Posterior vena cava (tissue), 2 donors: ENCODE measurements at regions of chr6 and their contacts with region 1.

Region 1: DNA sequence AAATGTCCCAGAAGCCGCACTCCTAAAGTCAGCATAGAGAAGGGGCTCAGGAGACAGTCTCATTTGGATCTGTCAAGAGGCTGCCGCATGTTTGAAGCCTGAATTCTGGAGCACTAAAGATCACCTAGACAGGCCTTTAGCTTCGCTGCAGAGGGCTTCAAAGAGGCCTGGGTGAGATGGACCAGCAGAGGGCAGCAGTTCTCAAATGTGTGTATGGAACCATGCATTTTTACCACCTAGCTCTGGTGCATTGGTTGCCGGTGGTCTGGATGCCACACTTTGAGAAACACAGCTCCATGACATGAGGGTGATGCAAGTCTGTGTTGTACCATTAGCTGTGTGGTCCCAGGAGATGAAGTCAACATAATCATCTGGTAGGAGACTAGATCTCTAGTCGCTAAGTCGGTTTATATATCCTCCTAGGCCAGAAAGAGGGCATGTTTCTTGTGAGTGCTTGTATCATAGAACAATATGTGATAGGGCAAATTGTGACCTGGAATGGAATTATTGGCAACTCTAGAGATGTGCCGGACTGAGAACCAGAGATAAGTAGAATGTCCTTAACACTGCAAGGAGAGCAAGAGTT is 64.8 kb downstream of the KIAA0319 start:
- DNase-seq: peak; percentile 90

Region 2: GRCh38 chr6:24332306-24332705 is 248.9 kb before region 1 on chr6:
- intact Hi-C with region 1: no loop called
- DNase-seq: no peak

Region 3: GRCh38 chr6:24689964-24690363 is 108.8 kb after region 1 on chr6:
- intact Hi-C with region 1: loop called (anchors 5 to 10 kb)
- DNase-seq: no peak

Region 4: DNA sequence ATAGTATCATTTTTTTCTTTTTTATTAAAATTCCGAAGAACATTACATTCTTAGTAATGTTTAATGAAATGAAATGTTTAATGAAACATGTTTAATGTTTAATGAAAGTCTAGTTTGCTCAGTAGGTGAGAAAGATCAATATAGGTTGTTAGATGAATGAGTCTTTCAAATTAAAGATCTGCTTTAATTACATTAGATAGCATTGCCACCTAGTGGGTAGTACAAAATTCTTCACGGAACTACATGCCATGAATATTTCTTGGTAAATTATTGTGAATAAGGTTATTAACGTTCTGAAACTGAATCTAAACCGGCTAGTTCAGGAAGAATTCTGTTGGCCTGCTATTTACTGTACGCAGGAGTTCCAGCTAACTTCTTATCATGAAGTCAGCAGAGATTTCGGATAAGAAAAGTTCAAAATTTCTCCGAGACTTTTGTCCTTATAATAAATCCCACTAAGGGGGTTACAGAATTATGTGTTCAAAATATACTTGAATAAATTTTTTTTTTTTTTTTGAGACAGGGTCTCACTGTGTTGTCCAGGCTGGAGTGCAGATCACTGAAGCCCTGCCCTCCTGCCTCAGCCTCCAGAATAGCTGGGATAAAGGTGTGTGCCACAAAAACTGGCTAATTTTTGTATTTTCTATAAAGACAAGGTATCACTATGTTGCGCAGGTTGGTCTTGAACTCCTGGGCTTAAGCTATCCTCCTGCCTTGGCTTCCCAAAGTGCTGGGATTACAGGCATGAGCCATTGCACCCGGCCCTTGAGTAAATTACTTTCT is 185.7 kb after region 1 on chr6:
- intact Hi-C with region 1: loop called (anchors 10 kb)
- DNase-seq: no peak